H1 (cell line): ENCODE measurements at regions of chr6 and their contacts with region 1.

Region 1: GRCh38 chr6:85460921-85461797 is 11.3 kb downstream of the NT5E start:
- DNase-seq: no peak
- H3K4me3 ChIP-seq: no peak overlapping the region
- H3K27ac ChIP-seq: no peak overlapping the region
- H3K4me1 ChIP-seq: peaks cover 0 to 10% (median 3%) of the 10 kb centered on the region in 4 experiments; a peak in 4 of 7 replicates
- H3K27me3 ChIP-seq: no peaks in the 10 kb centered on the region
- CTCF ChIP-seq: no peak
- EP300 ChIP-seq: no peak
- POLR2A ChIP-seq: no peak
- RAD21 ChIP-seq: no peak

Region 2: GRCh38 chr6:85449818-85450759 is 11.1 kb before region 1 on chr6 and contains the start of gene NT5E:
- CTCF ChIA-PET with region 1: interaction called, 10 read pairs
- POLR2A ChIA-PET with region 1: interaction called, 15 read pairs
- DNase-seq: peak in 1 of 2 experiments; percentile 89
- H3K4me3 ChIP-seq: peak within 1 kb of the TSS; percentile 65 to 80 (median 69)
- H3K27ac ChIP-seq: no peak within 1 kb of the TSS
- H3K4me1 ChIP-seq: no peaks in the 10 kb centered on the region; a peak in 1 of 7 replicates
- H3K27me3 ChIP-seq: peaks cover 10 to 49% (median 40%) of the 10 kb centered on the region in 4 experiments
- CTCF ChIP-seq: peak in 1 of 3 experiments; percentile 7; a peak in 1 of 4 replicates
- EP300 ChIP-seq: no peak
- POLR2A ChIP-seq: peak in 1 of 2 experiments; percentile 49; a peak in 1 of 3 replicates
- RAD21 ChIP-seq: no peak
- total RNA-seq, gene NT5E: 1.1 and 1.5 TPM in 2 replicates

Region 3: GRCh38 chr6:85472749-85473148 is 11.6 kb after region 1 on chr6:
- CTCF ChIA-PET with region 1: interaction called, 10 read pairs
- POLR2A ChIA-PET with region 1: no interaction called
- DNase-seq: no peak
- H3K4me3 ChIP-seq: no peak overlapping the region
- H3K27ac ChIP-seq: no peak overlapping the region
- H3K4me1 ChIP-seq: no peaks in the 10 kb centered on the region
- H3K27me3 ChIP-seq: no peaks in the 10 kb centered on the region
- CTCF ChIP-seq: no peak
- EP300 ChIP-seq: no peak
- POLR2A ChIP-seq: no peak
- RAD21 ChIP-seq: no peak